Heart right ventricle (tissue), 16 donors: ENCODE measurements at regions of chr15 and their contacts with region 1.

Region 1: GRCh38 chr15:70165716-70166284 is 68.1 kb upstream of the TLE3 start:
- DNase-seq: peak; percentile 75 to 87
- ATAC-seq: peak; percentile 87 to 95 (median 92)
- H3K4me3 ChIP-seq: no peak overlapping the region
- H3K27ac ChIP-seq: peak overlapping the region; percentile 44 to 92 (median 74)
- H3K4me1 ChIP-seq: peaks cover 19 to 35% (median 30%) of the 10 kb centered on the region in 9 donors
- H3K27me3 ChIP-seq: peaks cover 0 to 5% (median 0%) of the 10 kb centered on the region in 7 donors
- CTCF ChIP-seq: no peak

Region 2: GRCh38 chr15:70111203-70112073 is 54.4 kb before region 1 on chr15:
- intact Hi-C with region 1: loop called in 2 of 10 experiments (anchors 5 to 10 kb)
- DNase-seq: peak; percentile 63 to 90
- ATAC-seq: peak; percentile 92 to 98 (median 94)
- H3K4me3 ChIP-seq: peak overlapping the region in 9 of 10 donors; percentile 1 to 39 (median 29)
- H3K27ac ChIP-seq: peak overlapping the region; percentile 72 to 94 (median 88)
- H3K4me1 ChIP-seq: peaks cover 8 to 40% (median 22%) of the 10 kb centered on the region in 9 donors
- H3K27me3 ChIP-seq: peaks cover 0 to 3% (median 0%) of the 10 kb centered on the region in 7 donors
- CTCF ChIP-seq: no peak

Region 3: GRCh38 chr15:70281811-70282307 is 116.1 kb after region 1 on chr15:
- intact Hi-C with region 1: loop called in 1 of 10 experiments (anchors 10 kb)
- DNase-seq: no peak
- ATAC-seq: peak in 5 of 8 donors; percentile 33 to 79 (median 40)
- H3K4me3 ChIP-seq: no peak overlapping the region
- H3K27ac ChIP-seq: no peak overlapping the region
- H3K4me1 ChIP-seq: peaks cover 0 to 11% (median 4%) of the 10 kb centered on the region in 9 donors
- H3K27me3 ChIP-seq: no peaks in the 10 kb centered on the region
- CTCF ChIP-seq: no peak

Region 4: GRCh38 chr15:70435369-70435768 is 269.6 kb after region 1 on chr15:
- intact Hi-C with region 1: loop called in 1 of 10 experiments (anchors 10 kb)
- DNase-seq: no peak
- ATAC-seq: no peak
- H3K4me3 ChIP-seq: no peak overlapping the region
- H3K27ac ChIP-seq: no peak overlapping the region
- H3K4me1 ChIP-seq: peaks cover 2 to 45% (median 29%) of the 10 kb centered on the region in 9 donors
- H3K27me3 ChIP-seq: peaks cover 0 to 6% (median 0%) of the 10 kb centered on the region in 7 donors
- CTCF ChIP-seq: no peak